ENCODE measurements at regions of chr16 and their contacts with region 1.

Region 1: GRCh38 chr16:25868106-25868505 is 176.3 kb downstream of the HS3ST4 start:
- DNase-seq: no peak
- H3K4me3 ChIP-seq: no peak overlapping the region
- CTCF ChIP-seq: no peak

Region 2: DNA sequence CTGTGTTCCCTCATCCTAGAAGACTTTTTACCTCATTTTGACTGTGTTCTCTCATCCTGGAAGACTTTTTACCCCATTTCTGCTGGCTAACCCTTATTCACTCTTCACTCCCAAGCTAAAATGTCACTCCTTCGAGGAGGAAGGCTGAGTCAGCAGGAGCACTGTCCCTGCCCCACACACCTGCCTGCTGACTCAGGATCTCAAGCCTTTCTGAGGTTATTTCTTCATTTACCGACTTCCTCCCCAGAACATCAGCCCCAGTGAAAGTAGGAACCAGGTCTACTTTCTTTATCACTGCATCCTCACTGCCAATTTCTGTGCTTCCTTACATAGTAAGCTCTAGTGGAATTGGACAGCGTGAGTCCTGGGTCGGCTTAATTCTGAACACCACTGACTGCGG is 44.2 kb after region 1 on chr16:
- in situ Hi-C with region 1: no loop called
- DNase-seq: no peak
- H3K4me3 ChIP-seq: no peak overlapping the region
- CTCF ChIP-seq: no peak

Region 3: GRCh38 chr16:25959221-25959620 is 91.1 kb after region 1 on chr16:
- in situ Hi-C with region 1: no loop called
- DNase-seq: no peak
- H3K4me3 ChIP-seq: no peak overlapping the region
- CTCF ChIP-seq: no peak

Region 4: DNA sequence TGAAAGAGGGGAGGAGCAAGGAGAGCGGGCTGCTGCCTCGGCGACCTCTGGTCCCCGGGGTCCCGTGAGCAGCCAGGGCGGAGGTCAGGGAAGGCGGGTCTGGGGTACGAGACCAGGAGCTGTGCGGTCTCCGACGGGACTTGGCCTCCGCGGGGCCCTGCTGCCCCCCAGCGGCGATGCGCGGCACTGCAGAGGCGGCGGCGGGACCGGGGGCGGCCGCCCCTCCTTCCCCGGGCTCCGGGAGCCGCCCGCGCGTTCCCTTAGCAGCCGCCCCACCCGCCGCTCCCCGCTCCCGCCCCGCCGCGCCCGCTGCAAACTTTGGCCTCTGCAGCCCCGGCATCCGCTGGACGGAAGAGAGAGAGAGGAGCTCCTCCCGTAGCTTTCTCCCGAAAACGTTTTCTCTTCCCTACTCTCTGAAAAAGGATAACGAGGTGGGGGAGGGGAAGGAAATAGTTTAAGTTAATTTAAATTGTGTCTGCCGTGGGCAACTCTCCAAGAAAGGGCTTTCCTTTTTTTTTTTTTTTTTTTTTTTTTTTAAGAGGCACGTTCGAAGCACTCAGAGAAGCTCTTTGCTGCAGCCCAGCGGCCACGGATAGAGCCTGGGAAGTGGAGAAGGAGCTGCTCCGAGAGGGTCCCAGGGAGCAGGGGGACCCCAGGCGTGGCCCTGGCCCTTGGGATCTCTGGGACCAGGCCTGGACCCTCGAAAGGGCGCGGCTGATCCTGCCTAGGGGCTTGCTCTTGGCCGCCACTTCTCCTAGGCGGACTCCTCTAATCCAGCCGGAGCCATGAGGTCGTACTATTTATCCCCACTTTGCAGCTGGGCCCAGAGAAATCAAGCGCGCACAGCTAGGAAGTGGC is 1241.8 kb after region 1 on chr16:
- in situ Hi-C with region 1: loop called (anchors 25 kb)
- DNase-seq: peak; percentile 28
- H3K4me3 ChIP-seq: peak overlapping the region; percentile 39
- CTCF ChIP-seq: peak; percentile 77

Measured in astrocyte of the cerebellum (primary cell).